Right lobe of liver (tissue), 6 donors: ENCODE measurements at regions of chr7 and their contacts with region 1.

Region 1: DNA sequence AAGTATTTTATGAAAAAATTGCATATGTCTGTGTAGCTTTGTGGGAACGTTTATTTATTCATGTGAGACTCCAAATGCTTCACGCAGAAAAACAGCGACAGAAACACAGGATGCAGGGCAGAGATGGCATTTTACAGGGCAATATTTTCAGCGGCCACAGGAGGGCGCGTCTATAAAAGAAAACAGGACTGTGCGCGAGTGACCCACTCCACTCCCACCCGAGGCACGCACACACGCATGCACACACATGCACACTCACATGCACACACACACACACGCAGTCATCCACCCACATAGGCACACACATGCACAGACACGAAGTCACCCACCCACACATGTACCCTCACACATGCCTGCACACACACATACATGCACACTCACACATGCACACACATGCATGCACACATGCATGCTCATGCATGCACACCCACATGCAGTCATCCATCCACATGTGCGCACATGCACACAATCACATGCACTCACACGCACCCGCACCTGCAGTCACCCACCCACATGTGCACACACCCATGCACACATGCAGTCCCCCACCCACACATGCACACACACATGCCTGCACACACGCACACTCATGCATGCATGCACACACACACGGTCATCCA is 96.3 kb downstream of the DNAJB6 start:
- DNase-seq: peak in 1 of 3 donors; percentile 33
- ATAC-seq: peak; percentile 51 to 73 (median 60)
- H3K4me3 ChIP-seq: no peak overlapping the region
- H3K27ac ChIP-seq: no peak overlapping the region
- H3K4me1 ChIP-seq: no peaks in the 10 kb centered on the region
- H3K27me3 ChIP-seq: no peaks in the 10 kb centered on the region
- CTCF ChIP-seq: peak; percentile 46 to 59 (median 56)
- POLR2A ChIP-seq: no peak

Region 2: DNA sequence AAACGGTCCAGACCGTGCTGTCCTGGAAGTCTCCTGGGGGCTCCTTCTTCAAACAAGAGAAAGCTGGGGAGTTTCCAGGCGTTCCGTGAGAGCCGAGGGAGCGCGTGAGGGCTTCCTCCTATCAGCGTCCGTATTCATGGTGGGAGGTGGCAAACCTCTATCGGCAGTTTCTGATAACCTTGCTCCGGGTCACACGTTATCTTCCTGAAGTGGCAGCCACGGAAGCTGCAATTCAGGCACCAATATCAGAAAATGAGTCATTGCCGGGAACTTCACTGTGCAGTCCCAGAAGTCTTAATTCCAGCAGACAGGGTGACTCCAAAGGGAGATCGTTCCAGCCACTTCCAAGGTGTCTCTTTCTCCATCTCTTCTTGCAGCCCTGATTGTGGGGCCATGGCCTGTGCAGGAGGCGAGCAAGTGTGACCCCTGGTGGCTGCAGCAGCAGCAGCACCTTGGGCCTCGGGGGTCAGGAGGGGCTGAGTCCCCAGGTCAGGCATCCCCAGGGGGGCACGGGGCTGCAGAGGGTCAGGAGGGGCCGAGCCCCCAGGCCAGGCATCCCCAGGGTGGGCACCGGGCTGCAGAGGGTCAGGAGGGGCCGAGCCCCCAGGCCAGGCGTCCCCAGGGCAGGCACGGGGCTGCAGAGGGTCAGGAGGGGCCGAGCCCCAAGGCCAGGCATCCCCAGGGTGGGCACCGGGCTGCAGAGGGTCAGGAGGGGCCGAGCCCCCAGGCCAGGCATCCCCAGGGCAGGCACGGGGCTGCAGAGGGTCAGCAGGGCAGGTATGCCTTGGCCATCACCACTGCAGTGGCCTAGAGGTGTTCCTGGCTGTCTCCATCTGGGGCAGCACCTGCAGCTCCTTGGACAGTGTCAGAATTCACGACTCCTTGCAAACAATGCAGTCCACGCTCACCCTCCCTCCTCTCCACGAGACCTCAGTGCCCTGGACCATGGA is 442.4 kb after region 1 on chr7:
- intact Hi-C with region 1: loop called (anchors 10 kb)
- DNase-seq: no peak
- ATAC-seq: peak; percentile 70 to 82 (median 78)
- H3K4me3 ChIP-seq: no peak overlapping the region
- H3K27ac ChIP-seq: no peak overlapping the region
- H3K4me1 ChIP-seq: no peaks in the 10 kb centered on the region
- H3K27me3 ChIP-seq: no peaks in the 10 kb centered on the region
- CTCF ChIP-seq: peak; percentile 33 to 66 (median 64)
- POLR2A ChIP-seq: no peak